Activated T-helper 2 cell treated with anti-CD3 and anti-CD28 coated beads, Interferon-gamma antibody, Interleukin-2, Interleukin-4, amounts not matched to agents 10 μg/mL and 5 μg/mL and 100 μg/mL, durations not matched to agents 14 hours and 24 hours and 36 hours (primary cell): ENCODE measurements at regions of chr1 and their contacts with region 1.

Region 1: GRCh38 chr1:181142096-181142958 is 53.8 kb downstream of the IER5 start:
- DNase-seq: peak; percentile 81
- H3K4me3 Mint-ChIP-seq: peak overlapping the region; percentile 63
- H3K27ac Mint-ChIP-seq: peak overlapping the region; percentile 88
- H3K4me1 Mint-ChIP-seq: peaks cover 61% of the 10 kb centered on the region
- H3K27me3 Mint-ChIP-seq: peaks cover 4% of the 10 kb centered on the region

Region 2: DNA sequence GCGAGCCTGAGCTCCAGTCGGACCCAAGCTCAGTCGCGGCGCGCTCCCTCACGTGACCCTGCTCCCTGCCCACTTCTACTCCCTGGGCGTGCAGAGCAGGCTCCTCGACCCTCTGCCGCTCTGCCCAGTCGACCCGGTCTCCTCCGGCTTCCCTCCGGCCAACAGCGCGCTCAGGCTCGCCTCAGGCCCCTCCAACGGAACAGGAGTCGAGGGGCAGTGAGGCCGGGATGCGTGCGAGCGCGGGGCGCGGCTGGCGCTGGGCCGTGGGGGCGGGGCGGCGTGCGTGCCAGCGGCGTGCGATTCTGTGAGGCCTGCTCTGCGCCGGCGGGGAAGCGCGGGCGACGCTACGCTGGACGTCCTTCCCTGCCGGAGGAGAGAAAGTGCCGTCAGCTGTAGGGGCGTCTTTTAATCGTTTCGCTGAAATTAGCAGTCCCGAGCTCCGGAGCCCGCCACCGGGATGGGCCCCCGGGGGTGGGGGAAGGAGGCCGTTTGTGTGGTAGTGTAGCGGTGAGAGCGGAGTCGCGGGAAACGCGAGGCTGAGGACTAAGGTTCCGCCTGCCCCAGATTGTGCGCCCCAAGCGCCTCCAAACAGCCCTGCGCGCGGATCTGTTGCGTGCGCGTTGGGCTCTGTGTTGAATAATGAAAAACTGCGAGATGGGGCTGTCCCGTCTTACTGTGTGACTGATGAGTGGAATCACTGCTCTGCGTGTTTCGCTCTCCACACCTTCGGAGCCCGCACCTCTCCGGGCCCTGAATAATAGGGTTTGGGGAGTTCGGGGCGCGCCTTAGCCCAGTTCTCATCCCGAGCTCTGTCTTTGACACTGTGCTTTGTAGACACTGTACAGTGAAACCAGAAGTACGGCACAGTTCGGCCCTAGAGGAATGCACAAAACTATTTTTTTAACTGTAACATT is 639.7 kb before region 1 on chr1 and contains the start of gene ACBD6:
- intact Hi-C with region 1: loop called (anchors 5 kb)
- DNase-seq: peak; percentile 84
- H3K4me3 Mint-ChIP-seq: peak within 1 kb of the TSS; percentile 98
- H3K27ac Mint-ChIP-seq: peak within 1 kb of the TSS; percentile 96
- H3K4me1 Mint-ChIP-seq: peaks cover 22% of the 10 kb centered on the region
- H3K27me3 Mint-ChIP-seq: no peaks in the 10 kb centered on the region
- total RNA-seq, gene ACBD6: 48.9 and 50.1 TPM in 2 replicates

Region 3: DNA sequence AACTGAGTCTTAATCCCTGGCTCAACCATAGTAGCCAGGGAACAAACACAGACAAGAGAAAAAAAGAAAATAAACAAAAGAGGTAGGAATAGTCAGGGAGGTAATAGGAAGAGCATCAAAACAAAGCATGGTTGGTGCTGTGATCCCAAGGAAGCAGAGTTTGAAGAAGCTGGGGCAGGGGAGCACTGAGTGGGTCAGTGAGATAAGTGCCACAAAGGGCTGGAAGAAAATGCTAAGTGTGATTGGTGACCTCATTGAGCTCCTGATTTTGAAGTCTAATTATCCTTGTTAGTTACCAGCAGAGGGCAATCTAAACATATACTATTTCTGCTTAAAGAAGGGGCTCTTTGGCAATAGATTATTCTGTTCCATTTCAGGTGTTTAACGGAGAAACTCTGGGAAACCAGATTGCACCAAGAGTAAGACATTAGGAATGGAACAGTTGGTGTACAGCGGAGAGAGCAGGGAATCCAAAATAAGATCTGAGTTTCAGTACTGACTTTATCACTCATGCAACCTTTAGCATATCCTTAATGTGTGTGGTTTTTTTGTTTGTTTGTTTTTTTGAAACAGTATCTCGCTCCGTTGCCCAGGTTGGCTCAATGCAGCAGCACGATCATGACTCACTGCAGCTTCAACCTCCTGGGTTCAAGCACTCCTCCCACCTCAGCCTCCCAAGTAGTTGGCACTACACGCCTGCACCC is 260.4 kb before region 1 on chr1:
- intact Hi-C with region 1: loop called (anchors 5 kb)
- DNase-seq: no peak
- H3K4me3 Mint-ChIP-seq: no peak overlapping the region
- H3K27ac Mint-ChIP-seq: no peak overlapping the region
- H3K4me1 Mint-ChIP-seq: peaks cover 4% of the 10 kb centered on the region
- H3K27me3 Mint-ChIP-seq: no peaks in the 10 kb centered on the region

Region 4: DNA sequence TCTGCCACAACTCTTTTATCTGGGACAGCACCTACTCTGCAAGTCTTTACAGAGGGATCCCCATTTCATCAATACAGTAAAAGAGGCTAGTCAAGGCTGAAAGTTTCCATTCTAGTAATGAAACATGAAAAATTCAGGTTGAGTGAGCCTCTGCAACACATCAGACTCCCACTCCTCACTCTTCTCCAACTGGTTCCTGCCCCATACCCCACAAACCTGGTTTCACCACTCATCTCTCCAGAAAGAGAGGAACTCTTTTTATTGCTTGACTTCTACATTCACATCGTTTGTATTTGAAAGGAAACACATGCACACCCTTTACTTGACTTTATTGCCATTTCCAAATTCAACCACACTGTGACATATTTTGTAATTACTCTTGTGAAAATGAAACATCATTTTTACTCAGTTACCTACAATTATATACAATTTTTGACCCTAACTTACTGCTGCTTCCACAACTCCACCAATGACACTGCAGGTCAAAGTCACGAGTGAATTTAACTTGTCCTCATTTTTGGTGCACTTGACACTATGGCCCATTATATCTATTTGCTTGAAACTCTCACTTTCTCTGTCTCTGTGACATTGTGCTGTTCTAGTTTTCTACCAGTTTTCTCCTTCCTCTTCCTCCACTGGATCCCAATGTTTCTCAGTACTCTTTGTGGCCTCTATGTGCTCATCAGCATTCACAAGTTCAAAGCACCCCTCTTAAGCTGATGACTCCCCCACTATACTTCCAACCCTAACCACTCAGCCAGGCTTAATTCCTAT is 127.7 kb before region 1 on chr1:
- intact Hi-C with region 1: loop called (anchors 1 kb)
- DNase-seq: no peak
- H3K4me3 Mint-ChIP-seq: no peak overlapping the region
- H3K27ac Mint-ChIP-seq: no peak overlapping the region
- H3K4me1 Mint-ChIP-seq: peaks cover 47% of the 10 kb centered on the region
- H3K27me3 Mint-ChIP-seq: no peaks in the 10 kb centered on the region

Region 5: GRCh38 chr1:181033799-181034451 is 108.4 kb before region 1 on chr1 and contains the start of gene MR1:
- intact Hi-C with region 1: loop called (anchors 1 kb)
- DNase-seq: peak; percentile 42
- H3K4me3 Mint-ChIP-seq: peak within 1 kb of the TSS; percentile 93
- H3K27ac Mint-ChIP-seq: peak within 1 kb of the TSS; percentile 98
- H3K4me1 Mint-ChIP-seq: peaks cover 50% of the 10 kb centered on the region
- H3K27me3 Mint-ChIP-seq: peaks cover 2% of the 10 kb centered on the region
- total RNA-seq, gene MR1: 13.8 and 18.2 TPM in 2 replicates

Region 6: GRCh38 chr1:181099152-181100014 is 42.9 kb before region 1 on chr1:
- intact Hi-C with region 1: loop called (anchors 1 kb)
- DNase-seq: peak; percentile 45
- H3K4me3 Mint-ChIP-seq: peak overlapping the region; percentile 74
- H3K27ac Mint-ChIP-seq: peak overlapping the region; percentile 98
- H3K4me1 Mint-ChIP-seq: peaks cover 85% of the 10 kb centered on the region
- H3K27me3 Mint-ChIP-seq: no peaks in the 10 kb centered on the region

Region 7: DNA sequence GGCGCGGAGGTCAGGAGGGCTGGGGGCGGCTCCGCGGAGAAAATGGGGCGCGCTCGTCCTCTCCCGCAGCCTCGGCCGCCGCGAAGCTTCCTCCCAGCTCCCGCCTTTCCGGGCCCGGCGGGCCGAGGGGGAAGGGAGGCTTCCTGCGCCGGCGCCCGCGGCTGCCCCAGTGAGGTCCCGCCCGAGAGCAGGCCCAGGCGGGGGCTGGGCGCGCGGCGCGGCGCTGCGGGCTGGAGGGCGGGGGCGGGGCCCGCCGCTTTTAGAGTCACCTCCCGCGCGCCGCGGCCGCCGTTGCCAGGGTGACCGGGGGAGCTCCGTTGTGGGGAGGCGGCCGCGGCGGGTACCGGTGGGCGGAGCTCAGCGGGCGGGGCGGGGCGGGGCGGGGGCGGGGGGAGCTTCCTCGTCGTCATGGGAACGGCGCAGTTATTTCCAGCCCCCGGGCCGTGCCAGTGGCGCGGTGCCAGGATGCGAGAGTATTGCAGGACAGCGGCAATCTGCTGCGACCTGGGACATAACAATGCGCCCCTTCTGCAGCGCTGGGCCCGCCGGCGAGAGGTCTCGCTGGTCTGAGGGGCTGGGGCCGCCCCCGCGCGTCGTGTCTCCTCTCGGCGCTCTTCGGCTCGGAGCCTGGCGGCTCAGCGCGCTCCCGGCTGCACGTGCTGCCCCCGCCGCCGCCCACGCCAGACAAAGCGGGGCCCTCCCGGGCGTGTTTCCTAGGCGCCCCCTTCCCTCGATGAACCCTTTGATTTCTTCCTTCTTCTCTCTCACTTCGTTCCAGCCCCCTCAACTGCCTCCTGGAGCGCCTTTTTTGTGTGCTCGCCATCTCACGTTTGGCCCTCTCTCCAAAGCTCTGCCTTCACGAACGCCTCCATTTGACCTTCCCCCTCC is 36.9 kb before region 1 on chr1:
- intact Hi-C with region 1: loop called (anchors 1 kb)
- DNase-seq: peak; percentile 88
- H3K4me3 Mint-ChIP-seq: peak overlapping the region; percentile 85
- H3K27ac Mint-ChIP-seq: peak overlapping the region; percentile 79
- H3K4me1 Mint-ChIP-seq: peaks cover 59% of the 10 kb centered on the region
- H3K27me3 Mint-ChIP-seq: peaks cover 27% of the 10 kb centered on the region